WTC11 (cell line): ENCODE measurements at regions of chr5 and their contacts with region 1.

Region 1: DNA sequence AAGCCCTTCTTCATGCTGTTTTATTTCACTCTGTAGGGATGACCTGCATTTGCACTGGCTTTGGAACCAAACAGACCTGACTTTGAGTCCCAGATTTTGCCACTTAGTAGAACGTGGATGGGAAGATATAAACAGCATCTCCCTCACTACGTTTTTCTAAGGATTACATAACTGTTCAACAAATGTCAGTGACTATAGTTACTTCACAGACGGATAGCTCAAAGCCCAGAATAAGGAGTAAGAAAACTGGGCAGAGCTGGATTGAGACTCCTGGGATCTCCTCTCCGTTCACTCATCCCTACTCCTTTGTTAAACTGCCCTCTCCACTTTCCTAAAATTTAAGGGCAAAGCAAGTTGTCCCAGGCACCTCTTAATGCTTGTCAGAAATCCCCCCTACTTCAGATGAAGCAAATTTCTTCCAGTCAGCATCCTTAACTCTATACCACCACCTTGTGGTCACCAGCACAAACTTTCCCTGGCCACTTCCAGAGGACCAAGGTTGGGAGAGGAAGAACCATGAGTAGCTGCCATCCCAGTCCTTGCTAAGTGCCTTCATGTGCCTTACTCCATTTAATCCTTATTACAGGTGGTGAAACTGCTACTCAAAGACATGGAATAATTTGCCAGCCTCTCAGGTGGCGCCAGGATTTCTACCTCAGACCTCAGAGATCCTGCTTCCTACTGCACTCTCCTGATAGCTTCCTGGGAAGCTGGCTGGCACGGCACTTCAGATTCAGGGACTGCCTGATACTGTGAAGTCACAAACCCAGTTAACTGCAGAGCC is 38.4 kb downstream of the EGR1 start:
- DNase-seq: peak; percentile 27
- ATAC-seq: peak; percentile 84
- H3K4me3 Mint-ChIP-seq: no peak overlapping the region
- H3K27ac Mint-ChIP-seq: peak overlapping the region; percentile 85
- H3K4me1 Mint-ChIP-seq: no peaks in the 10 kb centered on the region
- H3K27me3 Mint-ChIP-seq: no peaks in the 10 kb centered on the region
- CTCF ChIP-seq: peak; percentile 64

Region 2: DNA sequence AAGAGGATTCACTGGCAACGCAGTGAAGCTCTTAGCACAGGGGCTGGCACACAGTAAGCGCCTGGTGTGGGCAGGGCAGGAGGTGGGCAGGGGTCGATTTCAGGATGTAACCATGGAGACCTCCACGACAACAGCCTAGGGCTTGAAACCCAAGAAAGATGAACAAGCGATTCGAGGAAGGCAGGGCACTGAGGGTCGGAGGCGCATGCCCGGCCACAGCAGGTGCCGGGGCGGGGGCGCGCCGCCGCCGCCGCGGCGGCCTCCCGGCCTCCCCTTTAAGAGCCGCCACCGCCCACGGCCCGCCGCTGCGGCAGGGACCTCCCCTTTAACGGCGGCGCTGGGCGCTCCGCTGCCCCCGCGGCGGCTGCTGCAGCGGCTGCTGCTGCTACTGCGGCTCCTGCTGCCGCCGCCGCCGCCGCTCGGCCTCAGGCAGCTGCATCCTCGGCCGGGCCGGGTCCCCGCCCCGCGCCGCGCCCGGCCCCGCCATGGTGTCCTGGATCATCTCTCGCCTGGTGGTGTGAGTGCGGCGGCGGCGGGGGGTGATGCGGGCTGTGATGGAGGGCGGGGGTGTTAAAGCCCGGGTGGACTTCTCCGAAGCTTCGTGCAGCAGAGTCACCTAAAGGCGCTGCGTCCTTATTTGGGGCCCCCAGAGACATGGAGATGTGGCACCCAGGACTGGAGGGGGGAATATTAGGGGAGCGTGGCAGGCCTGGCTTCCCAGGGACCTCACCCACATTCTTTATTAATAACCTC is 64.8 kb before region 1 on chr5 and contains the start of gene REEP2:
- CTCF ChIA-PET with region 1: interaction called, 29 read pairs
- POLR2A ChIA-PET with region 1: no interaction called
- DNase-seq: peak; percentile 74
- ATAC-seq: peak; percentile 72
- H3K4me3 Mint-ChIP-seq: peak within 1 kb of the TSS; percentile 85
- H3K27ac Mint-ChIP-seq: peak within 1 kb of the TSS; percentile 8
- H3K4me1 Mint-ChIP-seq: peaks cover 19% of the 10 kb centered on the region
- H3K27me3 Mint-ChIP-seq: no peaks in the 10 kb centered on the region
- CTCF ChIP-seq: no peak
- total RNA-seq, gene REEP2: 47.7 to 51.1 TPM (median 50.9 TPM) in 3 replicates

Region 3: DNA sequence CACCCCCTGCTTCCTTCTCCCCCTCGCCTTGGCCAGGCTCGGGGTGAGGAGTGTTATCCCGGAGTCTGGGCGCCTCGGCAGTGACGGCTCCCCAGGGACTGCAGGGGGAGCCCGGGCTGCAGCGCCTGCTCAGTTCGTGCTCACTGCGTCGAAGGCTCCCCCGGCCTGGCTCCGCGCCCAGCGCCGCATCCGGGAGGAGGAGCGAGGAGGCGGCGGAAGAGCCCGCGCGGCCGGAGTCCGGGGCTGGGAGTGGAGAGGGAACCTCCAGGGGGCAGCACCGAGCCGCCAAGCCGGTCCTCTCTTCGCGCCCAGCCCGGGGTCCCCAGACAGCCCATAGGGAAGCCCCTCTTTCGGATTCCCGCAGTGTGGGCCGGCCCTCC is 39.7 kb before region 1 on chr5:
- CTCF ChIA-PET with region 1: interaction called, 254 read pairs
- POLR2A ChIA-PET with region 1: interaction called, 28 read pairs
- DNase-seq: peak; percentile 92
- ATAC-seq: peak; percentile 61
- H3K4me3 Mint-ChIP-seq: peak overlapping the region; percentile 83
- H3K27ac Mint-ChIP-seq: peak overlapping the region; percentile 94; the same call in 1 of the 2 replicates
- H3K4me1 Mint-ChIP-seq: 0 out of 2 replicates have a peak, but pooled peaks cover 7% of the 10 kb centered on the region
- H3K27me3 Mint-ChIP-seq: peaks cover 34% of the 10 kb centered on the region
- CTCF ChIP-seq: peak; percentile 83

Region 4: DNA sequence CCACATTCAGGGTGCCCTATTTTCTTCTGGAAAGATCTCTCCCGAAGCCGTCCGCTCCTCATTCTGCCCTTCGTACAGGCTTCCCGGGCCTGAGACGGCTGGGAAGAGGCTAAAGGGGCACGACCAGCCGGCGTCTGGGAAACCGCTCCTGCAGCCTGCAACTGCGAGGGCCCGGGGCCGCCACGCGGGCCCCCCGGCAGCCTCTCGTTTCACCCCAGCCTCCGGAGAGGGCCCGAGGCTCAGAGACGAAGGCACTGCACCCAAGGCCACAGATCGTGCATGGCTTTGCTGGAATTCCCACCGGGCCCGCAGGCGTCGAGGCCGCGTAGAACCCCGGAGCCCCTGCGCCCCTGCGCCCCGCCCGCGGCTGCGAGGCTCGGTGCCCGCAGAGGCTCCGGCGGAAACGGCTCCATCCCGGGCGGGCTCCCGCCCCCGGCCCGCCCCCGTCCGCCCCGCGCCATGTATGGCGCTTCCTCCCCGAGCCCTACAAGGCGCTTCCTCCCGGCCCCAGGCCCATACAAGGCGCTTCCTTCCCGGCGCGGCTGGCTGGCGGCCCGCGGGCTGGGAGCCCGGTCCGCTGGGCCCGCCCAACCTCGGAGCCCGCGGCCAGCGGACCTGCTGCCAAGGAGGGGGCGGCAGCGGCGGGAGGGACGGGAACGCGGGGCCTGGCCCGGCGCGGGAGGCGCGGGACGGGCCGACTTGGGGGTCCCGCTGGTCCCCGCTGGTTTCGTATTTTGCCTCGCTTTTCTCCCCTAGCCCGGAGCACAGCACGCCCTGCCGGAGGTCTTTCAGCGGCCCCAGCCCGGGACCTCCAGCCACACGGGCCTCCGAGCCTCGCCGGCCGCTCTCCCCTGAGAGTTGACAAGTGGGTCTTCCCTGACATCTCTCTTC is 11.8 kb before region 1 on chr5:
- CTCF ChIA-PET with region 1: interaction called, 19 read pairs
- POLR2A ChIA-PET with region 1: interaction called, 6 read pairs
- DNase-seq: peak; percentile 76
- ATAC-seq: peak; percentile 73
- H3K4me3 Mint-ChIP-seq: peak overlapping the region; percentile 82
- H3K27ac Mint-ChIP-seq: peak overlapping the region; percentile 92; the same call in 1 of the 2 replicates
- H3K4me1 Mint-ChIP-seq: peaks cover 20% of the 10 kb centered on the region
- H3K27me3 Mint-ChIP-seq: peaks cover 39% of the 10 kb centered on the region
- CTCF ChIP-seq: no peak

Region 5: GRCh38 chr5:138542956-138543729 is 39.5 kb after region 1 on chr5 and contains the start of gene ETF1:
- CTCF ChIA-PET with region 1: interaction called, 11 read pairs
- POLR2A ChIA-PET with region 1: interaction called, 3 read pairs
- DNase-seq: peak; percentile 100
- ATAC-seq: peak; percentile 95
- H3K4me3 Mint-ChIP-seq: peak within 1 kb of the TSS; percentile 100
- H3K27ac Mint-ChIP-seq: peak within 1 kb of the TSS; percentile 99
- H3K4me1 Mint-ChIP-seq: peaks cover 38% of the 10 kb centered on the region
- H3K27me3 Mint-ChIP-seq: no peaks in the 10 kb centered on the region
- CTCF ChIP-seq: no peak
- total RNA-seq, gene ETF1: 110 to 137 TPM (median 115 TPM) in 3 replicates

Region 6: GRCh38 chr5:138641547-138642298 is 138.0 kb after region 1 on chr5:
- CTCF ChIA-PET with region 1: no interaction called
- POLR2A ChIA-PET with region 1: no interaction called
- DNase-seq: peak; percentile 95
- ATAC-seq: peak; percentile 89
- H3K4me3 Mint-ChIP-seq: no peak overlapping the region
- H3K27ac Mint-ChIP-seq: peak overlapping the region; percentile 53; the same call in 1 of the 2 replicates
- H3K4me1 Mint-ChIP-seq: peaks cover 35% of the 10 kb centered on the region
- H3K27me3 Mint-ChIP-seq: no peaks in the 10 kb centered on the region
- CTCF ChIP-seq: peak; percentile 96